ENCODE measurements at regions of chr18 and their contacts with region 1.

Region 1: DNA sequence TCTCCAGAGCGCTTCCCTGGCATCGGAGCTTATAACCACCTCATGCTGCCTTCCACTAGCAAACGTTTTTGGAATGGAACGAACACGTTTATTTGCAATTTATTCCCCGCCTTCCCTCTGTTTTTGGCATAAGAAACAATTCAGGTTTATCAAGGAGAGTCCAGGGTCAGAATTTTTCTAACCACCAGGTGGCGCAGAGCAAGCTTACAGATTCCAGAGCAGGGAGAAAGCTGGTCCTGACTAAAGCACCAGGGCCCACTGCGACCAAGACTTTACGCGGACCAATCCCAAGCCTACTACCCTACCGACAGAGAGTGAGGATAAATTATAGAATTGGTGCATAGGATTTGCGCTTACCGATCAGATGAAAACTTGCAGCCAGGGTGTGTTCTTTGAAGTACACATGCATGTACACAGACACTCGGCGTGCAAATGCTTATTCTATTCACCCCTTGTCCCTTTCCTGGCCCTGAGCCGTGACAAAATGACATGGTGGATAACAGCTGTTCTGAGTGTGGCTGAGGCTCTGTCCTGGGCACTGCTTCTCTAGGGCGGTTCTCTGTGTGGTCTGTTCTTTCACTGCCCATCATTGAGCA is 34.7 kb downstream of the NAPG start:
- DNase-seq: peak; percentile 71
- ATAC-seq: peak; percentile 79
- H3K4me3 Mint-ChIP-seq: no peak overlapping the region
- H3K27ac Mint-ChIP-seq: no peak overlapping the region
- H3K4me1 Mint-ChIP-seq: peaks cover 2% of the 10 kb centered on the region
- H3K27me3 Mint-ChIP-seq: no peaks in the 10 kb centered on the region

Region 2: DNA sequence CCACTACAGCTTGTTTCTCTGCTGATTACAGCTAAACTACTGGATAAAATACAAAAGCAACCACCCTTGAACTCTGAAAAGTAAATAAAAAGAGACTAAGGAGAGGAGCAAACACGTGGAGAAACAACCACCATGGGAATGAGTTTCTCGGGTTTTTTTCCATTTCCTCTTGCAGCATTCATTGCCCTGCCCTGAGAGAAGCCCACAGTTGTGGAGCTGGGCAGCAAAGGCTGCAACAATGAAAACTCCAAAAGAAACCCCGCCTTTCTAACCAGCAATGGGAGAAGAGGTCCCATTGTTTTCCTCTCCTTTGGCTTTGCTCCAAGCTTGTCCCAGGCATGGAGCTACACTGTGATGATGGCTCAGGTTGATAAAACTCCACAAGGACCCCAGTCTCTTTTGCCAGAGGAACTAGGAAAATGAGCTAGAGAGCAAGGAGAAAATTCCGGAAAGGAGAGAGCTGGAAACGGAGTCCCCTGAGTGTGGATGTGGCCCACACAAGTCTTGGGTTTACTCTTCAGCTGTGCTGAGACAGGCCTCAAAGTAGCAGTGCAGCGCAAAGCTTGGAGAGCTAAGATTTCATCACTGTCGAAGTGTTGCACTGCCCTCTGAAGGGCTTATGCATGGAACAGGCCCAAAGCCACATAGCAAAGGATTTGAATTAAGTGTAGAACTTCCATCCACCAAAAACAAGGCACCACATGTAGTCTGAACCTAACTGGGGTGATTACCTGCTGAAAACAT is 13.8 kb before region 1 on chr18:
- CTCF ChIA-PET with region 1: interaction called, 17 read pairs
- POLR2A ChIA-PET with region 1: no interaction called
- DNase-seq: no peak
- ATAC-seq: no peak
- H3K4me3 Mint-ChIP-seq: no peak overlapping the region
- H3K27ac Mint-ChIP-seq: no peak overlapping the region
- H3K4me1 Mint-ChIP-seq: peaks cover 4% of the 10 kb centered on the region
- H3K27me3 Mint-ChIP-seq: no peaks in the 10 kb centered on the region

Measured in activated CD8-positive, alpha-beta T cell treated with anti-CD3 and anti-CD28 coated beads, Interleukin-2, amount 10 ng/mL, durations not matched to agents 7 days and 5 days (primary cell).